Activated B cell treated with CpG ODN at 0.5 μM for 24 hours (primary cell): ENCODE measurements at regions of chr13 and their contacts with region 1.

Region 1: GRCh38 chr13:99501184-99501847 is at the start of gene TM9SF2:
- DNase-seq: peak; percentile 98
- ATAC-seq: peak; percentile 61
- H3K4me3 Mint-ChIP-seq: peak within 1 kb of the TSS; percentile 97
- H3K27ac Mint-ChIP-seq: peak within 1 kb of the TSS; percentile 97
- H3K4me1 Mint-ChIP-seq: peaks cover 84% of the 10 kb centered on the region
- H3K27me3 Mint-ChIP-seq: no peaks in the 10 kb centered on the region
- CTCF ChIP-seq: no peak
- total RNA-seq, gene TM9SF2: 68.1 and 76.0 TPM in 2 replicates

Region 2: GRCh38 chr13:98370806-98371515 is 1130.4 kb before region 1 on chr13:
- CTCF ChIA-PET with region 1: no interaction called
- POLR2A ChIA-PET with region 1: no interaction called
- intact Hi-C with region 1: no loop called
- DNase-seq: no peak
- ATAC-seq: no peak
- H3K4me3 Mint-ChIP-seq: no peak overlapping the region
- H3K27ac Mint-ChIP-seq: no peak overlapping the region
- H3K4me1 Mint-ChIP-seq: no peaks in the 10 kb centered on the region
- H3K27me3 Mint-ChIP-seq: peaks cover 5% of the 10 kb centered on the region
- CTCF ChIP-seq: no peak

Region 3: DNA sequence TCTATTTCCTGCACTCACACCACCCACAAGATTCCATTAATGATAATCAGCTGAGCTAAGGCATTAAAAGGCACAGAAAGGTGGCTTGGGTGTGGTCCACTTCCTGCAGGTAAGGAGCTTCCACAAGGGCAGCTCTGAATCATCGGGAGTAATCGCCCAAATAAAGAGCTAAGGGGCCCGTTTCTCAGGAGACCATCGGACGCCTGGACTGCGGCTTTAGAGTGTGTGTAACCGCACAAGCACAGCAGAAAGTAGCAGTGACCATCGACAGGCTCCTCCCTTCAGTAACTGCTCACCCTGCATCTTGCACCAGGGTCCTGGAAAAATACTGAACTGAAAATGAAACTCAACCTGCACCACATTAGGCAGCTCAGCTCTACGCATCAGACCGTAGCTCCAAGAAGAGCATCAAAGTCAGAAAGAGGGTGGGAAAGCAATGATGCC is 930.4 kb before region 1 on chr13:
- CTCF ChIA-PET with region 1: no interaction called
- POLR2A ChIA-PET with region 1: no interaction called
- intact Hi-C with region 1: loop called (anchors 5 kb)
- DNase-seq: peak; percentile 39
- ATAC-seq: peak; percentile 84
- H3K4me3 Mint-ChIP-seq: peak overlapping the region; percentile 82
- H3K27ac Mint-ChIP-seq: peak overlapping the region; percentile 91
- H3K4me1 Mint-ChIP-seq: peaks cover 99% of the 10 kb centered on the region
- H3K27me3 Mint-ChIP-seq: no peaks in the 10 kb centered on the region
- CTCF ChIP-seq: no peak

Region 4: GRCh38 chr13:99237981-99238662 is 263.2 kb before region 1 on chr13:
- CTCF ChIA-PET with region 1: no interaction called
- POLR2A ChIA-PET with region 1: interaction called, 12 read pairs
- intact Hi-C with region 1: no loop called
- DNase-seq: no peak
- ATAC-seq: peak; percentile 74
- H3K4me3 Mint-ChIP-seq: peak overlapping the region; percentile 72
- H3K27ac Mint-ChIP-seq: peak overlapping the region; percentile 84
- H3K4me1 Mint-ChIP-seq: peaks cover 62% of the 10 kb centered on the region
- H3K27me3 Mint-ChIP-seq: no peaks in the 10 kb centered on the region
- CTCF ChIP-seq: no peak

Region 5: GRCh38 chr13:99442273-99442895 is 58.9 kb before region 1 on chr13:
- CTCF ChIA-PET with region 1: interaction called, 15 read pairs
- POLR2A ChIA-PET with region 1: interaction called, 3 read pairs
- intact Hi-C with region 1: loop called (anchors 1 kb)
- DNase-seq: no peak
- ATAC-seq: peak; percentile 78
- H3K4me3 Mint-ChIP-seq: no peak overlapping the region
- H3K27ac Mint-ChIP-seq: no peak overlapping the region
- H3K4me1 Mint-ChIP-seq: peaks cover 16% of the 10 kb centered on the region
- H3K27me3 Mint-ChIP-seq: peaks cover 2% of the 10 kb centered on the region
- CTCF ChIP-seq: peak; percentile 99

Region 6: DNA sequence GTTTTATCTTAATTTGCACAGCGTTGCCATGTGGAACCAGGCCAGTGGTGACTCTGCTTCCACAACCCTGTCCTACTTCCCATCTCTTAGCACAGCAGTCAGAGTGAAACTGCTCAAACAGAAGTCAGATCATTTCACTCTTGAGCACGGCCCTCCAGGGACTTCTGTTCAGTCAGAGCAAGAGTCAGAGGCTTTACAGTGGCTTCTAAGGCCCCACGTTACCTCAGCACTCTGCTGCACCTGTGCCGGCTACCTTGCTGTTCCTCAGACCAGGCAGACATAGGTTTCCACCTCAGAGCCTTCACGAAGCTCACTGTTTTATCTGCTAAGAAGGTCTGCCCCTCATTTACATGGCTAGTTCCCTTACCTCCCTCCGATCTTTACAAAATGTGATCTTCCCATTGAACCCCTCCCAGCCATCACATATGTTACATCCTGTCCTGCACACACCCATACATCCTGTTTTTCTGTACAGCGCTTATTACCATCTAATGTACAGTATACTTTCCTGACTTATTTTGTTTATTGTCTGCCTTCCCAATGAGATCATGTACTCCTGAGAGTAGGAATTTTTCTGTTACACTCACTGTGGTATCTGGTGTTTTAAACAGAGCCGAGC is 41.6 kb after region 1 on chr13:
- CTCF ChIA-PET with region 1: interaction called, 4 read pairs
- POLR2A ChIA-PET with region 1: interaction called, 11 read pairs
- intact Hi-C with region 1: loop called (anchors 1 kb)
- DNase-seq: peak; percentile 61
- ATAC-seq: peak; percentile 94
- H3K4me3 Mint-ChIP-seq: peak overlapping the region; percentile 53
- H3K27ac Mint-ChIP-seq: peak overlapping the region; percentile 84
- H3K4me1 Mint-ChIP-seq: peaks cover 67% of the 10 kb centered on the region
- H3K27me3 Mint-ChIP-seq: no peaks in the 10 kb centered on the region
- CTCF ChIP-seq: no peak

Region 7: GRCh38 chr13:99792079-99792921 is 291.0 kb after region 1 on chr13:
- CTCF ChIA-PET with region 1: no interaction called
- POLR2A ChIA-PET with region 1: no interaction called
- intact Hi-C with region 1: no loop called
- DNase-seq: no peak
- ATAC-seq: no peak
- H3K4me3 Mint-ChIP-seq: no peak overlapping the region
- H3K27ac Mint-ChIP-seq: no peak overlapping the region
- H3K4me1 Mint-ChIP-seq: no peaks in the 10 kb centered on the region
- H3K27me3 Mint-ChIP-seq: no peaks in the 10 kb centered on the region
- CTCF ChIP-seq: no peak

Region 8: GRCh38 chr13:99925999-99926731 is 424.8 kb after region 1 on chr13:
- CTCF ChIA-PET with region 1: no interaction called
- POLR2A ChIA-PET with region 1: no interaction called
- intact Hi-C with region 1: no loop called
- DNase-seq: no peak
- ATAC-seq: no peak
- H3K4me3 Mint-ChIP-seq: no peak overlapping the region
- H3K27ac Mint-ChIP-seq: no peak overlapping the region
- H3K4me1 Mint-ChIP-seq: no peaks in the 10 kb centered on the region
- H3K27me3 Mint-ChIP-seq: peaks cover 18% of the 10 kb centered on the region
- CTCF ChIP-seq: no peak

Region 9: GRCh38 chr13:100674848-100675660 is 1173.7 kb after region 1 on chr13:
- CTCF ChIA-PET with region 1: no interaction called
- POLR2A ChIA-PET with region 1: no interaction called
- intact Hi-C with region 1: loop called (anchors 1 kb)
- DNase-seq: peak; percentile 100
- ATAC-seq: peak; percentile 93
- H3K4me3 Mint-ChIP-seq: peak overlapping the region; percentile 84
- H3K27ac Mint-ChIP-seq: peak overlapping the region; percentile 77
- H3K4me1 Mint-ChIP-seq: peaks cover 18% of the 10 kb centered on the region
- H3K27me3 Mint-ChIP-seq: no peaks in the 10 kb centered on the region
- CTCF ChIP-seq: no peak